ENCODE measurements at regions of chr15 and their contacts with region 1.

Region 1: DNA sequence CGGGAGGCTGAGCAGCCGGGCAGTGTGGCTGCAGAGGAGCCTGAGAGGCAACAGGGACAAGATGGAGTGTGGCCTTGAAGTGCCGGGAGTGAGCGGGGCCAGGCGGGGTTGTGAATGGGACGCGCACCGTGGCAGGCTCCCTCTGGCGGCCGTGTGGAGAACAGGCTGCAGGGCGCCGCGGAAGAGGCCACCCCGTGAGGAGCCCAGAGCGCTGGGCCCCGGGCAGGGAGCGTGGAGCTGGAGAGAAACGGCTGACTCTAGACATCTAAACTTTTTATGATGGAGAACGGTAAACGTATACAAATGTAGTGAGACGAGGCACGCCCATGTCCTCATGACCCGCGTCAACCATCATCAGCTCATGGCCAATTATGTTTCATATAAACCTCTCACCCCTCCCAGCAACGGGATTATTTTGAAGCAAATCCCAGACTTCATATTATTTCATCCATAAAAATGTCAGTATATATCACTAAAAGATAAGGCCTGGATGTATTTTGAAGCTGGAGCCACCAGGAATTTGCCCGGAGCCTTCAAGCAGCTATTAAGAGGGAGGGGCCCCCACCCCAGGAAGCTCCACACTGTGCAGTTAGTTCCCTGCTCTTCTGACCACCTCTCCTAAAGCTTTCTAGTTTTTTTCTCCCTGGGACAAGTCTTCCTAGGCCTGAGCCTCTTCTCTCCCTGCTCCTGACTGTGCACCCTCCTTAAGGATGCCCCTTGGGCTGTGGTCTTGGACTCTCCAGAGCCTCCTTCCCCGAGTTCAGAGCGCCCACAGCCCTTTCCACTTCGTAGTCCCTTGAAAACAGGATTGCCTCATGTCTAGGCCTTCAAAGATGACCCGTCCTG is 149.4 kb downstream of the SMAD6 start:
- DNase-seq: peak; percentile 85
- H3K4me3 Mint-ChIP-seq: no peak overlapping the region
- H3K27ac Mint-ChIP-seq: no peak overlapping the region
- H3K4me1 Mint-ChIP-seq: peaks cover 9% of the 10 kb centered on the region
- H3K27me3 Mint-ChIP-seq: peaks cover 10% of the 10 kb centered on the region

Region 2: DNA sequence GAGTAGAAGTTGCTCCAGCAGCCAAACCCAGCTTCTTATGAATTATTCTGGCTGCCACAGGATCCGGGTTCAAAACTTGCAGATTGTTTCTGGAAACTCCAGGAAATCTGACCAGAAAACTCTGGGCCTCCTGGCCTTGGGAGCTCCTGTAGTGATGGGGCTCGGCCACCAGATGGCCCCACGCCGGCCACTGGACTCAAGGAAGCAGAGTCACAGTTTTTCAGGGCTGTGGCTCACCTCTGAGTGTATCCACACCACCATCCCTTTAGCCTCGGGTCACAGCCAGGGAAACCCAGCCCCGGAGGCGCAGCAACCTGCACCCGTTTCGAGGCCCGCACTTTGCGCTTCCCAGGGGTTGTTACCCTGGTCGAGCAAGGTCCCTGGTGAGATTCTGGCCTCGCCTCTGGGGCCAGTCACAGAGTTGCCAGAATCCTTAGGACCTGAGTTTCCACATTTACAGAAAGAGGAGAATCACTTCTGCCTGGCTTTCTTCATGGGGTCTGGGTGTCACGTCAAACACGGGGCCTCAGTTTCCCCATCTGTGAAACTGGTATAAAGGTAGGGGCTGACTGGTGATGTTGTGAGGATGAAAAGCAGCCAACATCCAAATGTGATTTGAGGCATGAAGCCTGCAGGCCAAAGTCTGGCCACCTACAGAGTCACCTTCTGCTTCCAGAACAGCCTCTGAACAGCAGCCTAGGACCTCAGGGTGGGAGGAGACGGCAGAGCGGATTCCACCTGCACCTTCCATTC is 232.1 kb before region 1 on chr15:
- CTCF ChIA-PET with region 1: interaction called, 49 read pairs
- POLR2A ChIA-PET with region 1: interaction called, 5 read pairs
- intact Hi-C with region 1: loop called (anchors 5 kb)
- DNase-seq: peak; percentile 60
- H3K4me3 Mint-ChIP-seq: no peak overlapping the region
- H3K27ac Mint-ChIP-seq: no peak overlapping the region
- H3K4me1 Mint-ChIP-seq: no peaks in the 10 kb centered on the region
- H3K27me3 Mint-ChIP-seq: peaks cover 21% of the 10 kb centered on the region

Region 3: DNA sequence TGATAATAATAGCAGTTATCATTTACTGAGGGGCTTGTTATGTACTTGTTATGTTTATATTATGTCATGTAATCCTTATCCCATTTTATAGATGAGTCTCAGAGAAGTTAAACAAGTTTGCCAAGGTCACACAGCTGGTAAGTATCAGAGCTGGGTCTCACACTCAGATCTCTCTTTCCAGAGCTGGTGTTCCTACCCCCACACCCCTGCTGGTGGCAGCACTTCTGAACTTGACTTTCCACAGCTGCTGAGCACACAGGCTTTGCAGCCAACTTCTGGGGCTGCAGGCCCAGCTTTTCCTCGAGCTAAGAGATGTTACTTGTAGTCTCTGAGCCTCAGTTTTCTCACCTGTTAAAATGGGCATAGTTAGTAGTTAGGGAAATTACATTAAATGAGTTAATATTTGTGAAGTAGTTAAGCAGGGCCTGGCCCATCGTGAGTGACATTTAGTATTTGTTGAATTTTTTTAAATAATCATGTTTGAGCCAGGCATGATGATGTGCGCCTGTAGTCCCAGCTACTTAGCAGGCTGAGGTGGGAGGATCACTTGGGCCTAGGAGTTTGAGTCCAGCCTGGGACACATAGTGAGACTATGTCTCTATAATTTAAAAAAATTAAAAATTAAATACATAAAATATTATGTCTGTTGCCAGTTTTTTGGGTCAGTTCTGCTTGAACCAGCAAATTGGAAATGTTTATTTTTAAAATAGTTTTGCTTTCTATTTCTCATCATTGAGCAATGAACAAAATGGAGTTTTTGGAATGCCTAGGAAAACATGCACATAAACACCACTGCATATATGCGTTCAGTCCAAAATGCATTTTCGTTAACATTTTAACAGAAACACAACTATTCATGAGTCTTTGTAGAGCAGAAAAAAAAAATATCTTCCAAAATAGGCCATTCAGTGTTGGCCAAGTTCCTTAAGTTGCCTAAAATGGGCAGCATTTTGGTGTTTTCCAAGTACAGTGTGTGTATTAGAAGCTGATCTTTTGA is 62.1 kb before region 1 on chr15:
- CTCF ChIA-PET with region 1: interaction called, 16 read pairs
- POLR2A ChIA-PET with region 1: no interaction called
- intact Hi-C with region 1: no loop called
- DNase-seq: no peak
- H3K4me3 Mint-ChIP-seq: no peak overlapping the region
- H3K27ac Mint-ChIP-seq: no peak overlapping the region
- H3K4me1 Mint-ChIP-seq: no peaks in the 10 kb centered on the region
- H3K27me3 Mint-ChIP-seq: no peaks in the 10 kb centered on the region

Region 4: GRCh38 chr15:66838671-66839239 is 12.7 kb before region 1 on chr15:
- CTCF ChIA-PET with region 1: interaction called, 56 read pairs
- POLR2A ChIA-PET with region 1: no interaction called
- intact Hi-C with region 1: no loop called
- DNase-seq: no peak
- H3K4me3 Mint-ChIP-seq: no peak overlapping the region
- H3K27ac Mint-ChIP-seq: no peak overlapping the region
- H3K4me1 Mint-ChIP-seq: peaks cover 2% of the 10 kb centered on the region
- H3K27me3 Mint-ChIP-seq: peaks cover 21% of the 10 kb centered on the region

Region 5: DNA sequence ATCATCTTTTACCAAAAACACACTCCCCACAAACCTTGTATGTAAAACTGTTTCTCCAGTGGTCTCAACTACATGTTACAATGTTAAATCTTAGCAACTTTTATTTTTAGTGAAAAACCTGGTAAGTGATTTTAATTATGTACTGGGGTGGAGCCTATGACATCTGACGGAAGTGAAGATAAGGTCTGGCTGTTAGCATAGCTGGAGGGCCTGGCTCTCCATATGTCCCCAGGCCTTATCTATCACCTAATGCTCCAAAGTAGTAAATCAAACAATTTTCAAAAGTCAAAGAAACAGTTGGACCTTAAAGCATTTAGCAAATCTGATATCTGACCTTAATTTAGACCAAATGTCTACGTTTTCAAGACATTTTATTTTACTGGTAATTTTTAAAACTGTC is 40.3 kb after region 1 on chr15:
- CTCF ChIA-PET with region 1: no interaction called
- POLR2A ChIA-PET with region 1: no interaction called
- intact Hi-C with region 1: no loop called
- DNase-seq: no peak
- H3K4me3 Mint-ChIP-seq: no peak overlapping the region
- H3K27ac Mint-ChIP-seq: no peak overlapping the region
- H3K4me1 Mint-ChIP-seq: peaks cover 4% of the 10 kb centered on the region
- H3K27me3 Mint-ChIP-seq: peaks cover 10% of the 10 kb centered on the region

Measured in activated CD4-positive, alpha-beta memory T cell treated with anti-CD3 and anti-CD28 coated beads for 36 hours (primary cell).